ENCODE measurements at regions of chr1 and their contacts with region 1.

Region 1: DNA sequence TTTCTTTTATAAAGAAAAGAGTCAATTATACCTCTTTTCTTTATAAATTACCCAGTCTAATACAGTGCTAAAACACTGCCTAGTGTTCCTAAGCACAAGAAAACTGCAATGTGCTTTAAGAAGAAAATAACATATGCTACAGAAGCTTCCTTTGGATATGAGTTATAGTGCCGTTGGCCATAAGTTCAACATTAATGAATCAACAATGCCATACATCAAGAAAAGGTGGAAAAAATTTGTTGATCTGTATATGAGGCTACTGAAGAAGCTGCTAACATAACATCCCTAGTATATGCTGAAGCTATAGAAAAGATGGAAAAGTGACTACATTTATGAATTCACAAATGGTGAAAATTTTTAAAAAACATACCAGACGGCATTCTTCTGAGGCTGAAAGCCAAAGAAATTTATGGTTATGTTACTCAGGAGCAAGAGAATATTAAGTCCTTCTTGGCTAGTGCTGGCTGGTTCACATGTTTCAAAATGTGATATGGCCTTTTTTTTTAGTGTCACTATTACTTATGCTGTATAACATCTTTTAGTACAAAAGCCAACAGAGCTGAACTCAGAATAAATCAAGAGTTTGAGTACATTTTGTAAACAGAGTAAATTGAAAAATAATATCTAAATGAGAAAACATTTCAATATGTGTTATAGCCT is 743.2 kb upstream of the RGS18 start:
- DNase-seq: no peak
- H3K4me3 ChIP-seq: no peak overlapping the region
- H3K27ac ChIP-seq: no peak overlapping the region
- H3K4me1 ChIP-seq: no peaks in the 10 kb centered on the region
- H3K27me3 ChIP-seq: no peaks in the 10 kb centered on the region
- CTCF ChIP-seq: no peak

Region 2: DNA sequence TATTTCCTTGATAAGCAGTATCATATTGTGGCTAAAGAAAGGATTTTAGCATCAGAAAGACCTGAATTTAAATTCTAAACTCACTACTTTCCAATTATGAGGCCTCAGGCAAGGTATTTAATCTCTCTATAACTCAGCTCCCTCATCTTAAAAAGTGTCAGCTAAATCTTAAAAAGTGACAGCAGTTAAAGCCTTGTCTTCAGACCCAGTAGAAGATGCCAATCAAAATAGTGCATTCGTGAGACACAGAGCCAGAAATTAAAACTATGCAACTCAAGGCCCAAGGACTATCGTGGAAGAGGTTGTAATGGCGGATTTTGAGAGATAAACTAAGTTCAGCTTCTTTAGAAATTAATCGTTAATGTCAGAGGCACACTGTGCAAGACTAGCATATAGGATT is 259.9 kb before region 1 on chr1:
- CTCF ChIA-PET with region 1: no interaction called
- POLR2A ChIA-PET with region 1: no interaction called
- intact Hi-C with region 1: no loop called
- DNase-seq: no peak
- H3K4me3 ChIP-seq: no peak overlapping the region
- H3K27ac ChIP-seq: no peak overlapping the region
- H3K4me1 ChIP-seq: no peaks in the 10 kb centered on the region
- H3K27me3 ChIP-seq: no peaks in the 10 kb centered on the region
- CTCF ChIP-seq: no peak

Region 3: GRCh38 chr1:191222206-191222605 is 192.9 kb before region 1 on chr1:
- CTCF ChIA-PET with region 1: no interaction called
- POLR2A ChIA-PET with region 1: no interaction called
- intact Hi-C with region 1: no loop called
- DNase-seq: no peak
- H3K4me3 ChIP-seq: no peak overlapping the region
- H3K27ac ChIP-seq: no peak overlapping the region
- H3K4me1 ChIP-seq: no peaks in the 10 kb centered on the region
- H3K27me3 ChIP-seq: no peaks in the 10 kb centered on the region
- CTCF ChIP-seq: no peak

Region 4: DNA sequence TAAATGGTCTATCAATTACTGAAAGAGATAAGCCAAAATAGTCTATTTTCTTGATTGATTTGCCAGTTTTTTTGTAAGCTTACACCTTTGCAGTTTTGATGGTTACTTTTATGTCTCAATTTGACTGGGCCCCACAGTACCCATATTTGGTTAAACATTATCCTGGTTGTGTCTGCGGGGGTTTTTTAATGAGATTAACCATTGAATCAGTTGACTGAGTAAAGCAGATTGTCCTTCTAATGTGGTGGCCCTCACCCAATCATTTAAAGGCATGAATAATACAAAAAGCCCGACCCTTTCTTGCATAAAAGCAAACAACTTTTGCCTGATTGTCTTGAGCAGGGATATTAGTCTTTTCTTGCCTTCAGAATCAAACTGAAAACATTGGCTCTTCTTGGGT is 93.1 kb after region 1 on chr1:
- CTCF ChIA-PET with region 1: no interaction called
- POLR2A ChIA-PET with region 1: no interaction called
- intact Hi-C with region 1: loop called (anchors 5 kb)
- DNase-seq: no peak
- H3K4me3 ChIP-seq: no peak overlapping the region
- H3K27ac ChIP-seq: no peak overlapping the region
- H3K4me1 ChIP-seq: no peaks in the 10 kb centered on the region
- H3K27me3 ChIP-seq: no peaks in the 10 kb centered on the region
- CTCF ChIP-seq: no peak

Measured in PC-9 (cell line).